ENCODE measurements at regions of chr1 and their contacts with region 1.

Region 1: DNA sequence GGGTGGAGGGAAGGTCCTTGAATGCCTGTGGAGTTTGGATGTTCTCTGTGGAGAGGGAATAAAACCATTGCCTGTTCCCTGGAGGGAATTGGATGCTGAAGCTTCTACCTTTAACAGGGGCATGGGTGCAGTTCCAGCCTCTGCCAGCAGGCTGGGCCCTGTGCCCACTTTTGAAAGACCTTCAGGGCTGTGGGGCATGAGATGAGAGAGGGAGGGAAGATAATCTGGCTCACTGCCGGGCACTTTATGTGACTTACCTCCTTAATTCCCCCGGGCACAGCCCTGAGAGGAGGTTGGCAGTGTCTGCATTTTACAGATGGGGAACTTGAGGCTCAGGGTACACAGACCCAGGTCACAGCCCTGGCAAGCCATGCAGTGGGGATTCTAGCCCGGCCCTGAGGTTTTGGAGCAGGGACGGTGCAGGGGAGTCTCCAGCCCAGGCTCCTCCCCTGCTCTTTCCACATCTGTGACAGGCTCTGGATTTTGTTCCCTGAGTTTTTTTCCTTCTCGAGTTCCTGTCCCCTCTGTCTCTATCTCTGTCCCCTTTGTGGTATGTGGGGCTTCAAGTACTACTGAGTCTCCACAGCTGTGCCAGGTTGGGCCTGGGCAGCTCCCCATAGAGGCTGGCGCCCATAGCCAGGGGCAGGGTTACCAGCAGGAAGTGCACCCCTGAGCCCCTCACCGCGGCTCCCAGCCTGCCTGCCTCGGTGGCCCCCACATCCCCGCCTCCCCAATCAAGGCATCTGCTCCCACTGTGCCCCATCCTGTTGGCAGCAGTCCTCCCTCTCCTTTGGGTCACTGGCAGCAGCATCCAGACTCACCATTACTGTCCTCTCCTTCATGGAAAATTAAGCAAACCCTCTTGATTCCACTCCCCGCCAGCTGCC is 14.0 kb upstream of the THEMIS2 start:
- DNase-seq: peak; percentile 77
- H3K4me3 ChIP-seq: no peak overlapping the region
- H3K27ac ChIP-seq: no peak overlapping the region
- H3K4me1 ChIP-seq: peaks cover 13% of the 10 kb centered on the region
- H3K27me3 ChIP-seq: no peaks in the 10 kb centered on the region
- CTCF ChIP-seq: peak; percentile 99

Region 2: GRCh38 chr1:27959400-27960217 is 101.3 kb after region 1 on chr1 and contains the start of gene XKR8:
- CTCF ChIA-PET with region 1: interaction called, 3 read pairs
- dilution Hi-C with region 1: loop called (anchors 5 kb)
- in situ Hi-C with region 1: no loop called
- intact Hi-C with region 1: no loop called
- DNase-seq: peak; percentile 82
- H3K4me3 ChIP-seq: peak within 1 kb of the TSS; percentile 48 to 74 (median 54)
- H3K27ac ChIP-seq: peak within 1 kb of the TSS; percentile 30
- H3K4me1 ChIP-seq: peaks cover 17% of the 10 kb centered on the region
- H3K27me3 ChIP-seq: no peaks in the 10 kb centered on the region
- CTCF ChIP-seq: peak in 1 of 2 donors; percentile 41
- total RNA-seq, gene XKR8: 4.3 to 4.5 TPM

Region 3: DNA sequence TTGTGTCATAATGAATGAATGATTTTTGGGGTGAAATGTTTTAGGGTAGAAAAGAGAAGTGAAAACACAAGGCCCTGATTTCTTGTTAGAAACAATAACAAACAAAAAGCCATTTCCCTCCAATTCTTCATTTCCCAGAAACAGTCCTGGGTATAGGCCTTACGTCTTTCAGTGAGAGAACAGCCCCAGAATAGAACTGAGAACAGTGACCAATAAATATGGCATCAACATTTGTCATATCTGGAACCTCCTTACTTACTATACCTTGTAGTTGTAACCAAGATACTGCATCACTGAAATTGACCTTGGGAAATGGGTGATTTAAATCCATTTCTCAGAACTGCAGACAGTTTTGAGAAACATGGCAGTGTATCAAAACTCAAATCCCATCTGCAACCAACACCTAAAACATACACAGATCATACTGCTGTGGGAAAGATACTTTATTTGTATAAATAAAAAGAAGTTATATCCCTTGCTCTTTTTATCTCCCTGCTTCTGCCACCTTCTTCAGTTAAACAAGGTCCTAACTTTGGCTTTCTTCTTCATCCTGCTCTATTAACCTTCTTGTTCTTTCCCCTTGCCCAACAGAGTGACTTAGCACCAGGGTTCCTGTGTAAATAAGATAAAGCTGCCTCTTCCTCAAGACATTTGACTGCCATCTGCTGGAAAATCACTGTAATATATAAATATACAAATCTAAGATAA is 121.0 kb after region 1 on chr1:
- CTCF ChIA-PET with region 1: interaction called, 22 read pairs
- dilution Hi-C with region 1: no loop called
- in situ Hi-C with region 1: loop called (anchors 5 kb)
- intact Hi-C with region 1: loop called (anchors 1 kb)
- DNase-seq: peak; percentile 41
- H3K4me3 ChIP-seq: no peak overlapping the region
- H3K27ac ChIP-seq: no peak overlapping the region
- H3K4me1 ChIP-seq: no peaks in the 10 kb centered on the region
- H3K27me3 ChIP-seq: no peaks in the 10 kb centered on the region
- CTCF ChIP-seq: peak; percentile 45 to 60

Region 4: DNA sequence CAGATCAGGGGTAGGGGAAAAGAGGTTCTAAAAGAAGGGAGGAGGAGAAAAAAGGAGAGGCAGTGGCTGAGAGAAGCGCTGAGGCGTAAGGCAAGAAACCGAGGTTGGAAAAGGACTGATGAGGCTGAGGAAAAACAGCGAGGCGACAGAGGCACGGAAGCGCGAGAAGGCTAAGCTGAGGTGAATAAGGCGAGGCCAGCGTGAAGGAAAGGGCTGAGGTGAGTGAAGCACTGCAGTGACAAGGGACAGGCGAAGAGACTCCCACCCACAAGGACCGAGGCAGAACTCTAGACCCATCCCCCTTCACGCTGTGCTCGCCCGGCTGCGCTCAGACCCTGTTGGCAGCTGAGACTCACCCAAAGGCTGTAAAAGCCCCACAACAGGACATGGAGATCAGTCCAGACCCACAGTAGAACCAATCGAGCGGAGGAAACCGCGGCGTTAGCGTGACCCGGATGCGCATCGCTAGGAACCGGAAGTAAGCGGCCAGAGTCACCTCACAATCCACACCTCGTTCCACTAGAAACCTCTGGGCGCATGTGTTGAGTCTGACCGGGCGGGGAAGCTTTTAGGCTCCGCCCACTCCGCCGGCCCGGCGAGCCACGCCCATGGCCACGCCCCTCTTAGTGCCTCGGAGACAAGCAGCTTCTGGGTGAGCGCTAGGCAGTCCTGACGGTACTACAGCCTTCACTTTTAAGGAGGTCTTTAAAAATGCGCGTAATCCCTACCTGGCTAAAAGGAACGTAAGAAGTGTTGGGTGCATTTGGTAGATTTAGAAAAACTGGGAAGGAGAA is 230.1 kb after region 1 on chr1 and contains the start of gene EYA3:
- CTCF ChIA-PET with region 1: no interaction called
- dilution Hi-C with region 1: no loop called
- in situ Hi-C with region 1: no loop called
- intact Hi-C with region 1: loop called (anchors 1 kb)
- DNase-seq: peak; percentile 98
- H3K4me3 ChIP-seq: peak within 1 kb of the TSS; percentile 74 to 85 (median 75)
- H3K27ac ChIP-seq: peak within 1 kb of the TSS; percentile 85
- H3K4me1 ChIP-seq: peaks cover 11% of the 10 kb centered on the region
- H3K27me3 ChIP-seq: no peaks in the 10 kb centered on the region
- CTCF ChIP-seq: no peak
- total RNA-seq, gene EYA3: 12.3 to 21.9 TPM

Measured in mammary epithelial cell (primary cell).